ENCODE measurements at regions of chr1 and their contacts with region 1.

Region 1: DNA sequence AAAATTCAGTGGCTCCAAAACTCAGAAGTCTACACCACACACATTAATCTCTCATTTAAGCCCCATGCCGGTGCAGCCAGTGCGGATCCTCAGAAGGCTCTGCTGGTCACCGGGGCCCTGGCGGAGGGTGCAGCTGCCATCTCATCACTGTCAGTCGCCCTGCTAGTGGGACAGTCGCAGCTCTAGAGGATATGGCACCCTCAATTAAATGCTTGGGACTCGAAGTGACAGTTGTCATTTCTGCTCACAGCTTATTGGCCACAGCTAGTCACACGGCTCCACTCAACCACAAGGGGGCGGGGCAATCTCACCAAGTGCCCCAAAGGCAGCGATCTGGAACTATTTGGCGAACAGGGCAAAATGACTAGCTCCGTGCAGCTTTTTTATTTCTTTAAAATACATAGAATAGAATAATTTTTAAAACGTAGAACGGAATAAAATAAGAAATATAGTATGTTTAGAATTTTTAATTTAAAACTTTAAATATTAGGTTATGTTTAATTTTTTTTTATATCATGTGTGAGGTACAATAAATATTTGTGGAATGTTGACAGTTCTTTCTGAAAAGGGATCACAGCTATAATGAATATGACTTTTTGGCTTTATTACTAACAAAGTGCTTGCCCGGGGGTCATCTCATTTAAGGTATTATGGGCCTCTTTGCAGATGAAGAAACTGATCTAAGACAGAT is 8.0 kb upstream of the MAN1C1 start:
- DNase-seq: peak; percentile 94
- ATAC-seq: peak; percentile 98
- H3K4me3 Mint-ChIP-seq: peak overlapping the region; percentile 14
- H3K27ac Mint-ChIP-seq: no peak overlapping the region
- H3K4me1 Mint-ChIP-seq: peaks cover 14% of the 10 kb centered on the region
- H3K27me3 Mint-ChIP-seq: peaks cover 63% of the 10 kb centered on the region

Region 2: DNA sequence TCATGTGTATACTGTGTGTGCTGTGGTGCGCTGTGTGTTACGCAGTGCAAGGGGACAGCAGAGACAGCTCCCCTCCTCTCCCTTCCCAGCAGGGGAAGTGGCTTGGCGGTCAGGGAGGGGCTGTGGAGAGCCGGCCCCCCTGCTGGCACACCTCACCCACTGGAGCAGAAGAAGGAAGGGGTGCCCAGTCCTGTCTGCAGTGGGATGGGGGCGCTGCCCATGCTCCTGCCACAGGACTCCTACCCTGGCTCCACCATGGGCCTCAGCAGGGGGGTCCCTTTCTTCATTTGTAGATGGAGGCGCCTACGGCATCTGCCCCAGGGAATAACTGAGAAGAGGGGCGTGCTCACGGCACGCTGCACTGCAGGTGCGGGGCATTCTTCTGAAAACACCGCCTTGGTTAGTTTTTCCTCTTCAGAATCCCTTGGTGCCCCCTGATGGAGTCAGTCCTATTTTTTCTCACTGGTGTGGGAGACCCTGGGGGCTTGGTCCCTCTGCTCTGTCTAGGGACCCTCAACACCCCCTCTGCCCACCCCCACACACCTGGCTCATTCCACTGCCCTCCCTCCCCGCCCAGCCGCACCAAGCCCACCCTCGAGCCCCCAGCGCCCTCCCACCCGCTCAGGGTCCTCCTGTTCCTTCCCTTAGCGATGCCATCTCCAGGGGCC is 79.0 kb before region 1 on chr1:
- CTCF ChIA-PET with region 1: no interaction called
- POLR2A ChIA-PET with region 1: no interaction called
- DNase-seq: no peak
- ATAC-seq: no peak
- H3K4me3 Mint-ChIP-seq: no peak overlapping the region
- H3K27ac Mint-ChIP-seq: no peak overlapping the region
- H3K4me1 Mint-ChIP-seq: peaks cover 3% of the 10 kb centered on the region
- H3K27me3 Mint-ChIP-seq: no peaks in the 10 kb centered on the region

Region 3: DNA sequence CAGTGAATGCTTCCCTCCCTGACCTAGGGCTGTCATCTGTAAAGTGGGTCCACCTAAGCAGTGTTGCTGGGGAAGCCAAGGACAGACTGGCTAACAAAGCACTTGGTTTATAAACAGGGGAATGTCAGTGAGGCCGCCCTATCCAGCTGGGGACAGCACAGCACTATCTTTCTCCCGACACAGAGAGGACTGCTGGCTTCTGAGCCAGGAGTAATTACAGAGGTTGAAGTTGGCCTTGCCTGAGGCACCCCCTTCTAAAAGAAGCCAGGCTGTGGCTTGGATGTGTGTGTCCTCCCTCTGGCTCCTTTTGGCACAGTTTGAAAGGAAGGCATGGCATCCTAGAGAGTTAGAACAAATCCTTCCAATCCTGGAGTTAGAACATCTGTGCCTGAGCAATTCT is 66.7 kb before region 1 on chr1:
- CTCF ChIA-PET with region 1: no interaction called
- POLR2A ChIA-PET with region 1: no interaction called
- DNase-seq: no peak
- ATAC-seq: no peak
- H3K4me3 Mint-ChIP-seq: no peak overlapping the region
- H3K27ac Mint-ChIP-seq: no peak overlapping the region
- H3K4me1 Mint-ChIP-seq: peaks cover 27% of the 10 kb centered on the region
- H3K27me3 Mint-ChIP-seq: peaks cover 6% of the 10 kb centered on the region

Region 4: GRCh38 chr1:25658791-25659431 is 50.3 kb after region 1 on chr1:
- CTCF ChIA-PET with region 1: no interaction called
- POLR2A ChIA-PET with region 1: no interaction called
- DNase-seq: no peak
- ATAC-seq: no peak
- H3K4me3 Mint-ChIP-seq: no peak overlapping the region
- H3K27ac Mint-ChIP-seq: no peak overlapping the region
- H3K4me1 Mint-ChIP-seq: peaks cover 15% of the 10 kb centered on the region
- H3K27me3 Mint-ChIP-seq: peaks cover 3% of the 10 kb centered on the region

Region 5: DNA sequence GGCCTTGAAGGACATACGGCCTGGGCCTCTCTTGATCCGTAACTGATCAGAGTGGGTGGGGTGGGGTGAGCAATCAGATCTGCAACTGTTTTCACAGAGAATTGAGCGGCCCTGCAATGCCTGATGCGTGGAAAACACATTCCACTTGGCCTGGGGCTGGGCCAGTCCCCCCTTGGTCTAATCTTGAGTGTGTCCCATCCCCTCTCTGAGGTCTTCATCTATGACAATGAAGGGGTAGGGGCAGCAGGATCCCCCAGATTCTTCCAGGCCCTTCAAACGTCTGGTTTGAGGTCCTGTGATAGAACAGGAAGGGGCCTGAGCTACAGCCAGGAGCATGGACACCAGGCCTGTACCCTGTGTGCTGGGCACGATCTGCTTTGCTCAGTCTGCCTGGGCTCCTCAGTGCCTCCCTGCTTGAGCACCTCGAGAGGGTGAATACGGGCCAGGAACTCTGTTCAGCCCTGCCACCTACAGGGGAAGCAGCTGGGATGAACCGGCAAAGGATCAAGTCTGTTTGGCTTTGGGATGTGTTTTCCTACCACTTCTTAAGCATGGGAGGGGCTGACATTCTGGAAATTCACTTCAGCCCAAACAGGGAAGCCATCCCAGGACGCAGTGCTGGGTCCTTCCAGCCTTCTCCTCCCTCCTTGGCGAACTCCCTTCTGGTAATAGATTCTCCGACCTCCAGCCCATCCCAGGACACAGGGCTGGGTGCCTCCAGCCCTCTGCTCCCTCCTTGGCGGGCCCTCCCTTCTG is 135.4 kb after region 1 on chr1:
- CTCF ChIA-PET with region 1: no interaction called
- POLR2A ChIA-PET with region 1: no interaction called
- DNase-seq: no peak
- ATAC-seq: no peak
- H3K4me3 Mint-ChIP-seq: no peak overlapping the region
- H3K27ac Mint-ChIP-seq: no peak overlapping the region
- H3K4me1 Mint-ChIP-seq: peaks cover 4% of the 10 kb centered on the region
- H3K27me3 Mint-ChIP-seq: peaks cover 17% of the 10 kb centered on the region

Region 6: DNA sequence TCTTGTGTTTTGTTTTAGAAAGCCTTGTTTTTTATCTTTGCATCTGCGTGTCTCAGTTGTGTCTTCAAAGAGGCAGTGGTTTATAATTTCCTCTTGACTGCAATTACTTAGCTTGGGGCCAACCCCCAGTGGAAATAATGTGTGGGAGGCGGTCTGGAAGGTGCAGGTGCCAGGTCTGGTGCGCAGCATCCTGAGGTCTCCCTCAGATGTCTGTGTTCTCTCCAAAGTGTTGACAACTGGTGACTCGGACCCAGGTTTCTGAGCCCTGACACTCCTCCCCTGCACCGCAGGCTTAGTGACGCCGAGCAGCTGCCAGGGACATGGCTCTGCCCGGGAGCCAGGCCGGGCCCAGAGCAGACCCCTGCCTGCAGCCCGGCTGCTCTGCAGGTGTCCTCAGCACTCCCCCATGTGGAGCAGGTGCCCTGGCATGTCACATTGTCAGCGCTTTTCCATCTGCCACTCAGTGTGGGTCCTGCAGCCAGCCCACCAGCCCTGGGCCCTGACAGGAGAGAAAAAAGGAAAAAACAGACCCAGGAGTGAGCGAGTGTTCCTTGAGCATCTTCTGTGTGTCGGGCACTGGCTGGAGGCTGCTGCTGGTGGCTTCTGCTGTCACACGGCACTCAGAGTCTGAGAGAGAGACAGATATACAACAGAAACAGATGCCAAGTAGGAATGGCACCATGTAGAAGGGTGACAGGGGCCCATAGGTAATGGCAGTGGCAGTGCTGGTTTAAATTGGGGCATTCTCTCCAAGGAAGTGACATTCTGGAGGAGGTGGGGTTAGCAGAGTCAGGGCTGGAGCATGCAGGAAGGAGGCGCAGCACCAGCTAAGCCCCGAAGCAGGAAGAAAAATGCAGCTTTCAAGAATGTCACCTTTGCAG is 166.5 kb after region 1 on chr1:
- CTCF ChIA-PET with region 1: interaction called, 14 read pairs
- POLR2A ChIA-PET with region 1: no interaction called
- DNase-seq: peak; percentile 89
- ATAC-seq: peak; percentile 95
- H3K4me3 Mint-ChIP-seq: peak overlapping the region; percentile 53
- H3K27ac Mint-ChIP-seq: peak overlapping the region; percentile 79
- H3K4me1 Mint-ChIP-seq: peaks cover 38% of the 10 kb centered on the region
- H3K27me3 Mint-ChIP-seq: peaks cover 6% of the 10 kb centered on the region

Region 7: GRCh38 chr1:25796811-25797458 is 188.3 kb after region 1 on chr1:
- CTCF ChIA-PET with region 1: interaction called, 68 read pairs
- POLR2A ChIA-PET with region 1: no interaction called
- DNase-seq: peak; percentile 87
- ATAC-seq: peak; percentile 73
- H3K4me3 Mint-ChIP-seq: peak overlapping the region; percentile 33
- H3K27ac Mint-ChIP-seq: peak overlapping the region; percentile 70
- H3K4me1 Mint-ChIP-seq: peaks cover 50% of the 10 kb centered on the region
- H3K27me3 Mint-ChIP-seq: peaks cover 13% of the 10 kb centered on the region

Region 8: GRCh38 chr1:25810341-25811299 is 202.0 kb after region 1 on chr1:
- CTCF ChIA-PET with region 1: interaction called, 24 read pairs
- POLR2A ChIA-PET with region 1: interaction called, 3 read pairs
- DNase-seq: peak; percentile 86
- ATAC-seq: peak; percentile 88
- H3K4me3 Mint-ChIP-seq: no peak overlapping the region
- H3K27ac Mint-ChIP-seq: no peak overlapping the region
- H3K4me1 Mint-ChIP-seq: peaks cover 7% of the 10 kb centered on the region
- H3K27me3 Mint-ChIP-seq: no peaks in the 10 kb centered on the region

Measured in activated CD8-positive, alpha-beta T cell treated with anti-CD3 and anti-CD28 coated beads, Interleukin-2, amount 10 ng/mL, durations not matched to agents 7 days and 5 days (primary cell).